GM12878 (cell line): ENCODE measurements at regions of chr3 and their contacts with region 1.

Region 1: DNA sequence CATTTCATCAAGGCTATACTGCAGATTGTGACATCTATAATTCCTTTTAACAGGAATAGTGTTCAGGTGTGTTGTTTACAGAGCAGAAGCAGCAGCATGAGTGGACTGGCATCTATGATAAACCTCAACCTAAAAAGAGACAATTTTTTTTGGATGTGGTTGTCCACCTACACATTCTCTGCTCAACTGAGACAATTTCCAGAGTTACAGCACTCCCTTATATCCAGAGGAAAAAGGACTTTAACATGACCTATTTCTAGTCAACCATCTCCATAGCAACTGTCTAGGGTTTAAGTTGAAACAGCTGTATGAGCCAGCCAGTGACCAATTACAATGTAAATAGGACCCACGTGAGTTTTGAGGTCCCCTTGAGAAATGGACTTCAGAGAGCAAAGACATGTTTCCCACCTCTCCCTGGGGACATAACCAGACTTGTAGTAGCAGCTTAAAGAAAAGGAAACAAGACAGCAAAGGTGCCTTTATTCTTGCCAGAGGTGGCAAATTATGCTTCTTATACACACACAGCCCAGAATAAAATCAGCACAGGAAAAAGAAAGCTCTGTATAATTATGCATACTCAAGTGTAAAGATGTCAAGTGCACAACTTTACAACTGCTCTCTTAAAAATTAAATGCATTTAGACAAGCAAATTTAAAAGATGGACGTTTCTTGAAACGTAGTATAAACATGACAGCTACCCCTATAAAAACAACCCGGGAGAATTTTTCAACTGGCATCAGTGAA is 40.3 kb downstream of the SUMF1 start:
- DNase-seq: peak; percentile 91
- ATAC-seq: peak; percentile 90
- H3K4me3 ChIP-seq: no peak overlapping the region
- H3K27ac ChIP-seq: peak overlapping the region; percentile 33
- H3K4me1 ChIP-seq: peaks cover 11% of the 10 kb centered on the region
- H3K27me3 ChIP-seq: no peaks in the 10 kb centered on the region
- CTCF ChIP-seq: no peak
- EP300 ChIP-seq: peak in 1 of 2 experiments; percentile 68; a peak in 1 of 4 replicates
- POLR2A ChIP-seq: no peak
- RAD21 ChIP-seq: no peak

Region 2: DNA sequence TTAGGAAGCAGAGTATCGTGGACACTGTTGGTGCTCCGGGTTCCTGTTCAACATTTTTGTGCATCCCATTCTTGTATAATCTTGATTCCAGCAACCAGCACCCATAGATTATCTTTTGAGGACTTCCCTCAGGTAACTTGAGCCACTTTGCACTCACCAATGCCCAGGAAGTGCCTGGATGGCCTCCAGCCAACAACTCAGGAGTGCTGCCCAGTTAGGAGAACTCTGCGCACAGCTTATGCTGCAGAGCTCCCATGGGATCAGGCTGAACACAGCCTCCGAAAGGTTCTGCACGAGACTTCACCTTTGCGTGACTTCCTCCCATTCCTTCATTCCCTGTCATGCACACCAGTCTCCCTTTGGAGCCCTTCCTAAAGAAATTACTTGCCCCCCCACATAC is 691.9 kb before region 1 on chr3:
- CTCF ChIA-PET with region 1: no interaction called
- POLR2A ChIA-PET with region 1: no interaction called
- RAD21 ChIA-PET with region 1: no interaction called
- SMC1A ChIA-PET with region 1: no interaction called
- in situ Hi-C with region 1: no loop called
- intact Hi-C with region 1: no loop called
- DNase-seq: no peak
- ATAC-seq: no peak
- H3K4me3 ChIP-seq: no peak overlapping the region
- H3K27ac ChIP-seq: no peak overlapping the region
- H3K4me1 ChIP-seq: no peaks in the 10 kb centered on the region
- H3K27me3 ChIP-seq: no peaks in the 10 kb centered on the region; a peak in 2 of 4 replicates
- CTCF ChIP-seq: no peak
- EP300 ChIP-seq: no peak
- POLR2A ChIP-seq: no peak
- RAD21 ChIP-seq: no peak

Region 3: GRCh38 chr3:4303187-4304123 is 123.3 kb before region 1 on chr3 and contains the start of gene SETMAR:
- CTCF ChIA-PET with region 1: no interaction called
- POLR2A ChIA-PET with region 1: no interaction called
- RAD21 ChIA-PET with region 1: no interaction called
- SMC1A ChIA-PET with region 1: no interaction called
- in situ Hi-C with region 1: no loop called
- intact Hi-C with region 1: no loop called
- DNase-seq: no peak
- ATAC-seq: peak; percentile 97
- H3K4me3 ChIP-seq: peak within 1 kb of the TSS; percentile 92
- H3K27ac ChIP-seq: peak within 1 kb of the TSS; percentile 93
- H3K4me1 ChIP-seq: no peaks in the 10 kb centered on the region
- H3K27me3 ChIP-seq: no peaks in the 10 kb centered on the region
- CTCF ChIP-seq: no peak
- EP300 ChIP-seq: no peak
- POLR2A ChIP-seq: peak; percentile 91
- RAD21 ChIP-seq: no peak
- polyA plus RNA-seq, gene SETMAR: 7.1 to 11.6 TPM

Region 4: GRCh38 chr3:4409415-4409814 is 17.4 kb before region 1 on chr3:
- CTCF ChIA-PET with region 1: no interaction called
- POLR2A ChIA-PET with region 1: interaction called, 8 read pairs
- RAD21 ChIA-PET with region 1: interaction called, 11 read pairs
- SMC1A ChIA-PET with region 1: interaction called, 10 read pairs
- in situ Hi-C with region 1: no loop called
- intact Hi-C with region 1: no loop called
- DNase-seq: no peak
- ATAC-seq: peak; percentile 67
- H3K4me3 ChIP-seq: no peak overlapping the region
- H3K27ac ChIP-seq: no peak overlapping the region
- H3K4me1 ChIP-seq: peaks cover 18% of the 10 kb centered on the region
- H3K27me3 ChIP-seq: no peaks in the 10 kb centered on the region
- CTCF ChIP-seq: no peak
- EP300 ChIP-seq: no peak
- POLR2A ChIP-seq: no peak
- RAD21 ChIP-seq: no peak

Region 5: GRCh38 chr3:4474683-4475490 is 48.1 kb after region 1 on chr3:
- CTCF ChIA-PET with region 1: interaction called, 3 read pairs
- POLR2A ChIA-PET with region 1: no interaction called
- RAD21 ChIA-PET with region 1: interaction called, 15 read pairs
- SMC1A ChIA-PET with region 1: interaction called, 13 read pairs
- in situ Hi-C with region 1: no loop called
- intact Hi-C with region 1: no loop called
- DNase-seq: peak; percentile 81
- ATAC-seq: peak; percentile 91
- H3K4me3 ChIP-seq: peak overlapping the region; percentile 35; the same call in 1 of the 2 replicates
- H3K27ac ChIP-seq: peak overlapping the region; percentile 64
- H3K4me1 ChIP-seq: peaks cover 18% of the 10 kb centered on the region
- H3K27me3 ChIP-seq: no peaks in the 10 kb centered on the region
- CTCF ChIP-seq: no peak
- EP300 ChIP-seq: no peak
- POLR2A ChIP-seq: peak; percentile 42; the same call in 1 of the 2 replicates
- RAD21 ChIP-seq: no peak

Region 6: DNA sequence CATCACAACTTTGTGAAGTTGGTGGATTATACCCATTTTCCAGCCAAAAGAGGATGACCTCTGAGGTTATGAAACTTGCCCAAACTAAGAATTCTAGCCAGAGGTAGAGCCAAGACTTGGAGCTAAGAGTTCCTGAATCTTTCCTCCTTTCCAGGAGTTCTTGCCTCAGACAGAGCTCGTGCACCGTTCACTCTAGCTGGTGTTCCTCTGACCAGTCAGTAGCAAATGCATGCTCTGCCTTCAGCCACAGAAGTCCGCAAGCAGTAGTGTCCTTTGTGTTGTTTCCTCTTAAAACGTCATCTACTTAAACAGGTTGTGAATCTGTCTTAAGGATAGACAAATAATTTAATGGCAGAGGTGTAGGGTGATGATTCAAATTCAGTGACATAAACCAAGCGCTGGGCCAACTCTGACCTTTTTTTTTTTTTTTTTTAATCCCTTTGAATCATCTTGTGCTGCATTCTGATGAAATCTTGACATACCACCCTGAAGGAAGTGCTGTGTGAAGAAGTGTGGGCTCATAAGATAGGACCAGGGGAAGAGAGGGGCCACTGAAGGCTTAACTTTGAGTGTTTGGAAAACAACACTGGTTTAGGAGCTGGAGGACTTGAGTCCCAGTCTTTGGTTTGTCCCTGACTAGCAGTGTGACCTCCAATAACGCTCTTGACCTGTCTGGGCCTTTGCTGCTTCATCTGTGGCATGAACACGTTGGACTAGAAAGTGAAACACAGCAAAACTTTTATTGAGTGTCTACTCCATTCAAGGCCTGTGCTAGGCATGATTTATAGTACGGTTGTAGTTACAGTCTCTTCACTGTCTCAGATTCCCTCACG is 119.8 kb after region 1 on chr3:
- CTCF ChIA-PET with region 1: no interaction called
- POLR2A ChIA-PET with region 1: no interaction called
- RAD21 ChIA-PET with region 1: no interaction called
- SMC1A ChIA-PET with region 1: no interaction called
- in situ Hi-C with region 1: no loop called
- intact Hi-C with region 1: no loop called
- DNase-seq: no peak
- ATAC-seq: no peak
- H3K4me3 ChIP-seq: no peak overlapping the region
- H3K27ac ChIP-seq: no peak overlapping the region
- H3K4me1 ChIP-seq: no peaks in the 10 kb centered on the region
- H3K27me3 ChIP-seq: no peaks in the 10 kb centered on the region
- CTCF ChIP-seq: no peak
- EP300 ChIP-seq: no peak
- POLR2A ChIP-seq: no peak
- RAD21 ChIP-seq: no peak

Region 7: DNA sequence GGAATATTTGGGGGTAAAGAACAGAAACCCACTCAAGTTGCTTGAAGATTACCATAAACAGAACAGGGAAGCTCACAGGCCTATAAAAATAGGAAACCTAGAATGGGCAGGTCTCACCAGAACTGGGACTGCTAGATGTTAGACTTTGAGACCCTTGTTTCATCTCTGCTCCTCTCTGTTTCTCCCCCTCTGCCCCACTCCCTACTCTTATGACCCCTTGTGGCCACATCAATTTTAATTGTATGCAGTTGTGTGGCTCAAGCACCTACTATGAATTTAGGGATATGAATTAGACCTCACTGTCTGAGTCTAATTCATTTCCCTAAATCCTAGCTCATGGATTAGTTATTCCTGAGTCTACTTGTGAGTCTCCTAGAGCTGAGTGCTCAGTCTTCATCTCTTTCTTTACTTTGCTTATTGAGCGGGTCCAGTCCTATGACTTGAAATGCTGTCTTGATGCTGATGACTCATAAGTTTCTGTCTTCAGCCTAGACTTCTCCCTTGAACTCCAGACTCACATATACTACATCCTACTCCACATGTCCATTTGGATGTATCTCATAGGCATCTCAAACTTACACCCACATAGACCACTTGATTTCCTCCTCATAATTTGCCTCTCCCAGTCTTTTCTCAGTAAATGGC is 145.0 kb after region 1 on chr3:
- CTCF ChIA-PET with region 1: no interaction called
- POLR2A ChIA-PET with region 1: no interaction called
- RAD21 ChIA-PET with region 1: no interaction called
- SMC1A ChIA-PET with region 1: no interaction called
- in situ Hi-C with region 1: no loop called
- intact Hi-C with region 1: no loop called
- DNase-seq: no peak
- ATAC-seq: peak; percentile 77
- H3K4me3 ChIP-seq: no peak overlapping the region
- H3K27ac ChIP-seq: no peak overlapping the region
- H3K4me1 ChIP-seq: no peaks in the 10 kb centered on the region; the same call in 1 of the 2 replicates
- H3K27me3 ChIP-seq: no peaks in the 10 kb centered on the region
- CTCF ChIP-seq: peak; percentile 17 to 33 (median 30); a peak in 3 of 6 replicates
- EP300 ChIP-seq: no peak
- POLR2A ChIP-seq: no peak
- RAD21 ChIP-seq: peak; percentile 55; the same call in 1 of the 2 replicates